Right ventricle myocardium superior (tissue), 1 donor: ENCODE measurements at regions of chr4 and their contacts with region 1.

Region 1: GRCh38 chr4:147094237-147094636 is 148.6 kb upstream of the TTC29 start:
- DNase-seq: no peak
- ATAC-seq: peak; percentile 51

Region 2: DNA sequence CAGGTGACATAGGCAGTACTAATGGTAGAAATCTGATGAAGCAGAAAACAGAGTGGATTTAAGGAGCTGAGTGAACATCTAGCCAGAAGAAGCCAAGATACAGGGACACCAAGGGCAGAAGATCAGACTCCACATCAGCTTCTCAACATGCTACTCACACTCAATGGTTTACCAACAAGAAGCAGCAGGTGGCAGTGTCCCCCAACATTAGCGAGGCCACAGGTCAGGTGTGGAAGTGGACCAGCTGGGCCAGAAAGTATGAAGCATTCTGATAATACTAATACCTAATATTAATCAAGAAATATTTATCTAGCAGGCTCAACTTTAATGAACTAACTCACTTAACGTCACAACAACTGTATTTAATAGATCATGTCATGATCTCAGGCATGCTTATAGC is 75.2 kb before region 1 on chr4:
- intact Hi-C with region 1: loop called (anchors 5 kb)
- DNase-seq: peak; percentile 76
- ATAC-seq: peak; percentile 91